CD4-positive, alpha-beta T cell (primary cell): ENCODE measurements at regions of chr2 and their contacts with region 1.

Region 1: GRCh38 chr2:19901442-19902215 is at the start of gene TTC32:
- DNase-seq: peak; percentile 90 to 96 (median 92)
- ATAC-seq: peak; percentile 85
- H3K4me3 ChIP-seq: peak within 1 kb of the TSS; percentile 72
- H3K4me3 Mint-ChIP-seq: peak within 1 kb of the TSS; percentile 93
- H3K27ac ChIP-seq: peak within 1 kb of the TSS; percentile 94 to 97
- H3K27ac Mint-ChIP-seq: peak within 1 kb of the TSS; percentile 91
- H3K4me1 ChIP-seq: peaks cover 14% of the 10 kb centered on the region
- H3K4me1 Mint-ChIP-seq: peaks cover 40% of the 10 kb centered on the region
- H3K27me3 ChIP-seq: peaks cover 0 to 5% of the 10 kb centered on the region in 2 experiments
- H3K27me3 Mint-ChIP-seq: peaks cover 8% of the 10 kb centered on the region
- CTCF ChIP-seq: no peak
- total RNA-seq, gene TTC32: 53.1 to 54.2 TPM

Region 2: GRCh38 chr2:18560031-18560796 is 1341.4 kb before region 1 on chr2 and contains the start of gene RDH14:
- CTCF ChIA-PET with region 1: no interaction called
- POLR2A ChIA-PET with region 1: interaction called, 37 read pairs
- intact Hi-C with region 1: loop called (anchors 2 to 5 kb)
- DNase-seq: peak; percentile 84 to 95 (median 91)
- ATAC-seq: peak; percentile 89
- H3K4me3 ChIP-seq: peak within 1 kb of the TSS; percentile 55
- H3K4me3 Mint-ChIP-seq: peak within 1 kb of the TSS; percentile 97
- H3K27ac ChIP-seq: peak within 1 kb of the TSS; percentile 79 to 88
- H3K27ac Mint-ChIP-seq: peak within 1 kb of the TSS; percentile 93
- H3K4me1 ChIP-seq: peaks cover 13% of the 10 kb centered on the region
- H3K4me1 Mint-ChIP-seq: peaks cover 57% of the 10 kb centered on the region
- H3K27me3 ChIP-seq: no peaks in the 10 kb centered on the region
- H3K27me3 Mint-ChIP-seq: no peaks in the 10 kb centered on the region
- CTCF ChIP-seq: no peak
- total RNA-seq, gene RDH14: 11.4 to 12.7 TPM

Region 3: GRCh38 chr2:19868705-19869580 is 32.7 kb before region 1 on chr2:
- CTCF ChIA-PET with region 1: no interaction called
- POLR2A ChIA-PET with region 1: interaction called, 27 read pairs
- intact Hi-C with region 1: loop called (anchors 1 to 2 kb)
- DNase-seq: peak; percentile 49 to 82 (median 68)
- ATAC-seq: peak; percentile 92
- H3K4me3 ChIP-seq: peak overlapping the region; percentile 84
- H3K4me3 Mint-ChIP-seq: peak overlapping the region; percentile 98
- H3K27ac ChIP-seq: peak overlapping the region; percentile 69 to 75
- H3K27ac Mint-ChIP-seq: peak overlapping the region; percentile 99
- H3K4me1 ChIP-seq: peaks cover 24% of the 10 kb centered on the region
- H3K4me1 Mint-ChIP-seq: peaks cover 41% of the 10 kb centered on the region
- H3K27me3 ChIP-seq: no peaks in the 10 kb centered on the region
- H3K27me3 Mint-ChIP-seq: no peaks in the 10 kb centered on the region
- CTCF ChIP-seq: no peak

Region 4: GRCh38 chr2:19887510-19887909 is 14.1 kb before region 1 on chr2:
- CTCF ChIA-PET with region 1: interaction called, 3 read pairs
- POLR2A ChIA-PET with region 1: interaction called, 10 read pairs
- intact Hi-C with region 1: no loop called
- DNase-seq: no peak
- ATAC-seq: no peak
- H3K4me3 ChIP-seq: no peak overlapping the region
- H3K4me3 Mint-ChIP-seq: no peak overlapping the region
- H3K27ac ChIP-seq: no peak overlapping the region
- H3K27ac Mint-ChIP-seq: no peak overlapping the region
- H3K4me1 ChIP-seq: peaks cover 3% of the 10 kb centered on the region
- H3K4me1 Mint-ChIP-seq: peaks cover 8% of the 10 kb centered on the region
- H3K27me3 ChIP-seq: no peaks in the 10 kb centered on the region
- H3K27me3 Mint-ChIP-seq: no peaks in the 10 kb centered on the region
- CTCF ChIP-seq: no peak

Region 5: DNA sequence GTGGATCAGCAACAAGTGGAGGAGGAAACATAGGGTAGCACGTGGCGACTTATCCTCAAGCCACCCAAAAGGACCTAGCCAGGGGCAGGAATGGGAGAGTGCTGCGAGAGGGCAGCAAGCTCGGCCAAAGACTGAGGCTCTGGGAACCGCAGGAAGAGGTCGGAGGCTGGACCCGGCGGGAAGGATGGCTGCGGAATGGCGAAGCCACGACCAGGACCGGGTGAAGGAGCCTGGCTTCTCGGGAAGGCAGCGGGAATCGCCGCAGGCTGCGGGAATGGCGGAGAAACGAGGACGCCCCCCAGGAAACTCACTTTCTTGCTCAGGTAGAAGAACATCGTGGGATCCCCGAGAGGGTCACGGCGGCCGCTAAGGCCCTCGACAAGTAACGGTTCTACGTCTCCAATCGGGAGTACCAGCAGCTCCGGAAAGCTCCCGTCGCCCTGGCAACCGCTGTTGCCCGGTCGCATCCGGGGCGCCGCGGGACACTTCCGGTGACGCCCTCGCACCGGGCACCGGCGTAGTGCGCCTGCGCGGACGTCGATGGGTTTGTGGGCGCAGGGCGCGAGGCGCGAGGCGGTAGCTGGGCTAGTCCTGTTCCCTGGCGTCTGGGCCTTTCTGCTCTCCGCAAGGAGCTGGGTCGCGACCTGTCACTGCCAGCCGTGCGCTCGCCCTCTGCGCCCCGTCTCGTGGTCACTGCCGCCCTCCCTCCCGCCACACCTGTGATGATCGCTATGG is 88.2 kb after region 1 on chr2 and contains the start of gene WDR35:
- CTCF ChIA-PET with region 1: no interaction called
- POLR2A ChIA-PET with region 1: interaction called, 7 read pairs
- intact Hi-C with region 1: loop called (anchors 2 to 10 kb)
- DNase-seq: peak; percentile 76 to 93 (median 87)
- ATAC-seq: peak; percentile 91
- H3K4me3 ChIP-seq: peak within 1 kb of the TSS; percentile 90
- H3K4me3 Mint-ChIP-seq: peak within 1 kb of the TSS; percentile 93
- H3K27ac ChIP-seq: peak within 1 kb of the TSS; percentile 65 to 71
- H3K27ac Mint-ChIP-seq: peak within 1 kb of the TSS; percentile 82
- H3K4me1 ChIP-seq: peaks cover 14% of the 10 kb centered on the region
- H3K4me1 Mint-ChIP-seq: peaks cover 20% of the 10 kb centered on the region
- H3K27me3 ChIP-seq: peaks cover 0 to 11% of the 10 kb centered on the region in 2 experiments
- H3K27me3 Mint-ChIP-seq: peaks cover 23% of the 10 kb centered on the region
- CTCF ChIP-seq: no peak
- total RNA-seq, gene WDR35: 2.8 to 3.2 TPM

Region 6: GRCh38 chr2:20051532-20052228 is 150.1 kb after region 1 on chr2 and contains the start of gene LAPTM4A:
- CTCF ChIA-PET with region 1: no interaction called
- POLR2A ChIA-PET with region 1: interaction called, 12 read pairs
- intact Hi-C with region 1: loop called (anchors 1 to 2 kb)
- DNase-seq: peak; percentile 93 to 100 (median 96)
- ATAC-seq: peak; percentile 90
- H3K4me3 ChIP-seq: peak within 1 kb of the TSS; percentile 87
- H3K4me3 Mint-ChIP-seq: no peak within 1 kb of the TSS
- H3K27ac ChIP-seq: peak within 1 kb of the TSS; percentile 94 to 99
- H3K27ac Mint-ChIP-seq: no peak within 1 kb of the TSS
- H3K4me1 ChIP-seq: peaks cover 28% of the 10 kb centered on the region
- H3K4me1 Mint-ChIP-seq: peaks cover 29% of the 10 kb centered on the region
- H3K27me3 ChIP-seq: peaks cover 6 to 9% of the 10 kb centered on the region in 2 experiments
- H3K27me3 Mint-ChIP-seq: peaks cover 25% of the 10 kb centered on the region
- CTCF ChIP-seq: no peak
- total RNA-seq, gene LAPTM4A: 59.4 to 62.0 TPM

Region 7: GRCh38 chr2:20650880-20651730 is 749.5 kb after region 1 on chr2 and contains the start of gene HS1BP3:
- CTCF ChIA-PET with region 1: interaction called, 3 read pairs
- POLR2A ChIA-PET with region 1: interaction called, 5 read pairs
- intact Hi-C with region 1: loop called in 1 of 2 experiments (anchors 5 kb)
- DNase-seq: peak; percentile 77 to 97 (median 87)
- ATAC-seq: peak; percentile 90
- H3K4me3 ChIP-seq: peak within 1 kb of the TSS; percentile 96
- H3K4me3 Mint-ChIP-seq: peak within 1 kb of the TSS; percentile 94
- H3K27ac ChIP-seq: peak within 1 kb of the TSS; percentile 82 to 92
- H3K27ac Mint-ChIP-seq: peak within 1 kb of the TSS; percentile 89
- H3K4me1 ChIP-seq: peaks cover 28% of the 10 kb centered on the region
- H3K4me1 Mint-ChIP-seq: peaks cover 37% of the 10 kb centered on the region
- H3K27me3 ChIP-seq: no peaks in the 10 kb centered on the region
- H3K27me3 Mint-ChIP-seq: no peaks in the 10 kb centered on the region
- CTCF ChIP-seq: peak; percentile 69
- total RNA-seq, gene HS1BP3: 8.8 to 10.1 TPM